Ascending aorta (tissue), 2 donors: ENCODE measurements at regions of chr15 and their contacts with region 1.

Region 1: DNA sequence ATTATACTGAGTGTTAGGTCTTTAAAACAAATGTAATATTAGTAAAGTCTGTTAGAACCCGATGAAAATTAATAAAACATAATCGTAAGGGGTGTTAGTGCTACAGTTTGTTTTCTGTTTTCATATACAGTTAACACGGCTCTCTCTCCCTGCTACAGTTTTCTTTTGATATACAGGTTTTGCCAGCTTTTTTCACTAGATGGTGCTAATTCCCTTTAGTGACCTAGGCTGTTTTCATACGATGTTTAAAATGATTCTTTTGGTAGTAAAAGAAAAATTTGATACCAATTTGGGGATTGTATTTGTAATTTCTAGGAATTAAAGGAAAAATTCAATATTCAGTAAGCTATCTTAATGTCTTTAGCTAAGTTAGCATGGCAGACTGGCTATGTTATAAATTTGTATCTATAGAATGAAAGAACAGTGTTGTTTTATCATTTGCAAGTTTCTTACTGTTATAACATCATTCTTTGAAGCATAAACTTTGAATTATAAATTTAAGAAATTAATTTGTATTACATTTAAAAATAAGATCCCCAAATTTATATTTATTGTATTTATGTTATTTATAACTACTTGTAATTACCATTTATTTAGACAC is 11.5 kb downstream of the APH1B start:
- DNase-seq: no peak
- H3K4me3 ChIP-seq: no peak overlapping the region
- H3K27ac ChIP-seq: no peak overlapping the region
- H3K4me1 ChIP-seq: peaks cover 5 to 17% of the 10 kb centered on the region in 2 donors
- H3K27me3 ChIP-seq: no peaks in the 10 kb centered on the region
- CTCF ChIP-seq: peak; percentile 56 to 74 (median 65)

Region 2: GRCh38 chr15:63348392-63348791 is 59.5 kb after region 1 on chr15:
- intact Hi-C with region 1: loop called (anchors 5 kb)
- DNase-seq: peak in 1 of 2 donors; percentile 83
- H3K4me3 ChIP-seq: no peak overlapping the region
- H3K27ac ChIP-seq: peak overlapping the region; percentile 65 to 66
- H3K4me1 ChIP-seq: peaks cover 0 to 22% of the 10 kb centered on the region in 2 donors
- H3K27me3 ChIP-seq: no peaks in the 10 kb centered on the region
- CTCF ChIP-seq: no peak

Region 3: DNA sequence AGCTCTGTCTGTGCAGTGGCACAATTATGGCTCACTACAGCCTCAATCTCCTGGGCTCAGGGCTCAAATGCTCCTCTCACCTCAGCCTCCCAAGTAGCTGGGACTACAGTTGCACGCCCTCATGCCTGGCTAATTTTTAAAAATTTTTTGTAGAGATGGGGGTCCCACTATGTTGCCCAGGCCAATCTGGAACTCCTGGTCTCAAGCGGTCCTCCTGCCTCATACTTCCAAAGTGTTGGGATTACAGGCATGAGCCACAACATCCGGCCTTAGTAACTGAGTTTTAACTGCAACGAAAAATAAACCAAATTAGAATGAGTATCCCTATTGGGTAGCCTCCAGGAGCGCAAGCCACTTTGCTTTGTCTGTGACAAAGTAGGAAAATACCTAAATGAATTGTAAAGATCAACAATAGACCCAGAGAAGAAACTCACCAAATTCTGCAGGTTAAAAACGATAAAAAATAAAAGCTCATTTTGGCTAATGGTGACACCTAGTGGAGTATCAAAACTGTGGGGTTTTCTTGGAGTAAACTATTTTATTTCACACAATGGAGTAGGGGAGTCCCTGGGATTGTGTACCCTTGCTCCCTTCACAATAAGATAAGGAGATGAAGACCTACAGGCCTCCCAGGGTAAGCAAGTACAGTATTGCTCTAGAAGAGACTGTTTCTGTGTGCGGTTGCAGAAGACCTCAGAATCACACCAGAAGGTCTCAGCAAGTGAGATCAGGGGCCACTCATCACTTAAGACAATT is 113.8 kb after region 1 on chr15:
- intact Hi-C with region 1: loop called (anchors 1 kb)
- DNase-seq: peak in 1 of 2 donors; percentile 38
- H3K4me3 ChIP-seq: peak overlapping the region in 1 of 2 donors; percentile 34
- H3K27ac ChIP-seq: no peak overlapping the region
- H3K4me1 ChIP-seq: no peaks in the 10 kb centered on the region
- H3K27me3 ChIP-seq: no peaks in the 10 kb centered on the region
- CTCF ChIP-seq: peak; percentile 59 to 76 (median 63)

Region 4: DNA sequence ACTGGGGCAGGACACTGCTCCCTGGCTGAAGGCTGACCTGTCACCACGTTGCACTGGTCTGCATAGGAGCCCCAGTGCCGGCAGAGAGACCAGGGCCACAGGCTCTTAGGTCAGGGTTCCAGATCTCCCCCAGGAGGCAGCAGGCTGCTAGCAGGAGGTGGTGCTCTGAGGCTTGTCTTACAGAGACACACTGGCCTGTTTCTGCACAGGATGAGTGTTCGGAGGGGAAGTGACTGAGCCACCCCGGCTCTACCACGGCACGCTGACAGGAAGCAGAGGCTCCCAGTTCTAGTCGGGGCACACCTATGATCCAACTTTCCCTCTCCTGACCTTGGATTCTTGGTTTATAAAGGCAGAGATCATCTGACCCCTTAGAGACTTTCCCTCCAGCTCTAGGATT is 316.9 kb after region 1 on chr15:
- intact Hi-C with region 1: no loop called
- DNase-seq: no peak
- H3K4me3 ChIP-seq: no peak overlapping the region
- H3K27ac ChIP-seq: peak overlapping the region in 1 of 2 donors; percentile 9
- H3K4me1 ChIP-seq: peaks cover 0 to 20% of the 10 kb centered on the region in 2 donors
- H3K27me3 ChIP-seq: no peaks in the 10 kb centered on the region
- CTCF ChIP-seq: no peak